Activated CD8-positive, alpha-beta T cell treated with anti-CD3 and anti-CD28 coated beads for 36 hours (primary cell): ENCODE measurements at regions of chr11 and their contacts with region 1.

Region 1: GRCh38 chr11:65859200-65859811 is 927 bp upstream of the MUS81 start:
- DNase-seq: peak; percentile 100
- ATAC-seq: peak; percentile 72
- H3K4me3 Mint-ChIP-seq: peak overlapping the region; percentile 90
- H3K27ac Mint-ChIP-seq: peak overlapping the region; percentile 99
- H3K4me1 Mint-ChIP-seq: peaks cover 37% of the 10 kb centered on the region
- H3K27me3 Mint-ChIP-seq: no peaks in the 10 kb centered on the region
- CTCF ChIP-seq: no peak

Region 2: DNA sequence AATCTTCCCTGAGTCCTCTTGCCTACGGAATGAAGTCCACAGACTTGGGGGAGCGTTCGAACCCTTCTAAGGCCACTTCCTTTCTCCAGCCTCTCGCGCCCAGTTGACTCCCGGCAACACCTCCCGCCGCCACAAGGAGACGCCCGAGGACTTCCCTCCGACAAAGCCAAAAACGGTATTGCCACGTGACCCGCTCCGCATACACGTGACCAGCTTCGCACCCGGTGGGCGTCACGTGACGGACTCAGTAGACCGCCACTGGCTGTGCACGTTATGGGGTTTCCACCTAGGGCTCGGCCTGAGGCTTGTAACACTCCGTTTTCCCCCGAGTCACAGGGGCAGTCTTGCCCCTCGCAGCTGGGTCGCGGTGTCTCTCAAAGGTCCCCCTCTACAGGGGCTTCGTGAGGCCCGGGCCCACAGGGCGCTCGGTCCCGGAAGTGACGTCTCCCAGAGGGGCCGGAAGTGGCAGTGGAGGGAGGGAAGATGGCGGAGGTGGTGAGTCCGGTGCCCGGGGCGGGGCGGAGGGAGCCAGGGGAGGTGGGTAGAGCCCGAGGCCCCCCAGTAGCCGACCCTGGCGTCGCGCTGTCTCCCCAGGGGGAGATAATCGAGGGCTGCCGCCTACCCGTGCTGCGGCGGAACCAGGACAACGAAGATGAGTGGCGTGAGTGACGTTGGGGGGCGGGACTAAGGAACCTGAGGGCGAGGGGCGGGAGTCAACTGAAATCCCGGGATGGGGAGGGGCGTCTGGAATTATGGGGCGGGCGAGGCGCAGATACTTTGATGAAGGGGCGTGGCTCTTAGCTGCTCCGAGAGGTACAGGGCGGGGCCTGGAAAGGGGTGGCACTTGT is 147.3 kb before region 1 on chr11 and contains the start of gene KAT5:
- CTCF ChIA-PET with region 1: interaction called, 17 read pairs
- POLR2A ChIA-PET with region 1: interaction called, 10 read pairs
- intact Hi-C with region 1: no loop called
- DNase-seq: peak; percentile 99
- ATAC-seq: peak; percentile 82
- H3K4me3 Mint-ChIP-seq: peak within 1 kb of the TSS; percentile 93
- H3K27ac Mint-ChIP-seq: peak within 1 kb of the TSS; percentile 98
- H3K4me1 Mint-ChIP-seq: peaks cover 20% of the 10 kb centered on the region
- H3K27me3 Mint-ChIP-seq: no peaks in the 10 kb centered on the region
- CTCF ChIP-seq: peak; percentile 93
- total RNA-seq, gene KAT5: 67.7 to 71.8 TPM

Region 3: GRCh38 chr11:65873318-65874156 is 14.2 kb after region 1 on chr11:
- CTCF ChIA-PET with region 1: interaction called, 60 read pairs
- POLR2A ChIA-PET with region 1: interaction called, 560 read pairs
- intact Hi-C with region 1: no loop called
- DNase-seq: peak; percentile 97
- ATAC-seq: peak; percentile 97
- H3K4me3 Mint-ChIP-seq: peak overlapping the region; percentile 84
- H3K27ac Mint-ChIP-seq: peak overlapping the region; percentile 81
- H3K4me1 Mint-ChIP-seq: peaks cover 49% of the 10 kb centered on the region
- H3K27me3 Mint-ChIP-seq: no peaks in the 10 kb centered on the region
- CTCF ChIP-seq: no peak

Region 4: DNA sequence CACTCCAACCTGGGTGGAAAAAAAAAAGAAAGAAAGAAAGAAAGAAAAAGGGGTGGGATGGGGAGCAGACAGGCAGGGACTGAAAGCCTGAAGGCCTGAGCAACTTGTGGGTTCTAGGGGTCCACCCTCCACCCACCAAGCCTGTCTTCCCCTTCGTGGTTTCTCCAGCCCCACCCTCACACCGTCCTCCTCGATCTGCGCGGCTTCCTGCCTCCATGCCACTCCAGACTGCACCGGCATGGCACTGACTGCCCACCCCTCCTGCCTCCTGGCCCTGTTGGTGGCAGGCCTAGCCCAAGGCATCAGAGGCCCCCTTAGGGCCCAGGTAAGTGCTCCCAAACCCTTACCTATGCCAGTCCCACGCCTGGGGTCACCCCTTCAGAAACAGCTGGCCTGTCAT is 20.3 kb after region 1 on chr11 and contains the start of gene CTSW:
- CTCF ChIA-PET with region 1: interaction called, 283 read pairs
- POLR2A ChIA-PET with region 1: interaction called, 560 read pairs
- intact Hi-C with region 1: no loop called
- DNase-seq: peak; percentile 81
- ATAC-seq: peak; percentile 63
- H3K4me3 Mint-ChIP-seq: peak within 1 kb of the TSS; percentile 89
- H3K27ac Mint-ChIP-seq: peak within 1 kb of the TSS; percentile 91
- H3K4me1 Mint-ChIP-seq: peaks cover 55% of the 10 kb centered on the region
- H3K27me3 Mint-ChIP-seq: no peaks in the 10 kb centered on the region
- CTCF ChIP-seq: no peak
- total RNA-seq, gene CTSW: 124 to 126 TPM

Region 5: DNA sequence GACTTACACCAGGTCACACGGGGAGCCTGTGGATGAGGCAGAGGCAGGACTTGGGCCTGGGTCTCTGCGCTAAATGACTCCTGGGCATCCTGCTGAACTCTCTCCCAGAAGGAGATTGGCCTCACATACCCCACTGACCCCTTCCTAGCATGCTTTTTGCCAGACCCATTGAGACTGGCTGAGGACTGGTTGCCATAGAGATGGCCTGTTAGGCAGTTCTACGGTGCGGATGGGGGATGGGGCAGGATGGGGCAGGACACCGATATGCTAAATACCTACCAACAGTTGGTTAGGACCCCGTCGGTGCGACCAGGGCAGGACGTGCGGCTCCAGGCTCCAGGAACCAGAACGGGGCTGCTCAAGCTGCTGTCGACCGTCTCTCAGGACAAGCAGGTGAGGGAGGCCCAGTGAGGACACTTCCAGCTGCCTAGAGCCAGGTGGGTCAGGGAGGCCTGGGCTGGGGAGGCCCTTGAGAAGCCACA is 86.2 kb after region 1 on chr11 and contains the start of gene TSGA10IP:
- CTCF ChIA-PET with region 1: no interaction called
- POLR2A ChIA-PET with region 1: no interaction called
- intact Hi-C with region 1: no loop called
- DNase-seq: no peak
- ATAC-seq: no peak
- H3K4me3 Mint-ChIP-seq: no peak within 1 kb of the TSS
- H3K27ac Mint-ChIP-seq: no peak within 1 kb of the TSS
- H3K4me1 Mint-ChIP-seq: peaks cover 3% of the 10 kb centered on the region
- H3K27me3 Mint-ChIP-seq: no peaks in the 10 kb centered on the region
- CTCF ChIP-seq: no peak
- total RNA-seq, gene TSGA10IP: not detected